ENCODE measurements at regions of chr1 and their contacts with region 1.

Region 1: GRCh38 chr1:64291931-64292330 is 88.5 kb downstream of the UBE2U start:
- DNase-seq: no peak
- H3K4me3 ChIP-seq: no peak overlapping the region
- H3K27ac ChIP-seq: no peak overlapping the region
- H3K4me1 ChIP-seq: no peaks in the 10 kb centered on the region
- H3K27me3 ChIP-seq: no peaks in the 10 kb centered on the region
- CTCF ChIP-seq: no peak
- POLR2A ChIP-seq: no peak

Region 2: GRCh38 chr1:64310760-64311159 is 18.8 kb after region 1 on chr1:
- intact Hi-C with region 1: loop called (anchors 2 kb)
- DNase-seq: no peak
- H3K4me3 ChIP-seq: no peak overlapping the region
- H3K27ac ChIP-seq: no peak overlapping the region
- H3K4me1 ChIP-seq: no peaks in the 10 kb centered on the region
- H3K27me3 ChIP-seq: no peaks in the 10 kb centered on the region
- CTCF ChIP-seq: no peak
- POLR2A ChIP-seq: no peak

Region 3: GRCh38 chr1:64348961-64349648 is 57.2 kb after region 1 on chr1:
- intact Hi-C with region 1: no loop called
- DNase-seq: no peak
- H3K4me3 ChIP-seq: no peak overlapping the region
- H3K27ac ChIP-seq: no peak overlapping the region
- H3K4me1 ChIP-seq: no peaks in the 10 kb centered on the region
- H3K27me3 ChIP-seq: no peaks in the 10 kb centered on the region
- CTCF ChIP-seq: no peak
- POLR2A ChIP-seq: no peak

Measured in uterus (tissue), 4 donors.